Posterior cingulate gyrus (tissue), 11 donors: ENCODE measurements at regions of chr19 and their contacts with region 1.

Region 1: DNA sequence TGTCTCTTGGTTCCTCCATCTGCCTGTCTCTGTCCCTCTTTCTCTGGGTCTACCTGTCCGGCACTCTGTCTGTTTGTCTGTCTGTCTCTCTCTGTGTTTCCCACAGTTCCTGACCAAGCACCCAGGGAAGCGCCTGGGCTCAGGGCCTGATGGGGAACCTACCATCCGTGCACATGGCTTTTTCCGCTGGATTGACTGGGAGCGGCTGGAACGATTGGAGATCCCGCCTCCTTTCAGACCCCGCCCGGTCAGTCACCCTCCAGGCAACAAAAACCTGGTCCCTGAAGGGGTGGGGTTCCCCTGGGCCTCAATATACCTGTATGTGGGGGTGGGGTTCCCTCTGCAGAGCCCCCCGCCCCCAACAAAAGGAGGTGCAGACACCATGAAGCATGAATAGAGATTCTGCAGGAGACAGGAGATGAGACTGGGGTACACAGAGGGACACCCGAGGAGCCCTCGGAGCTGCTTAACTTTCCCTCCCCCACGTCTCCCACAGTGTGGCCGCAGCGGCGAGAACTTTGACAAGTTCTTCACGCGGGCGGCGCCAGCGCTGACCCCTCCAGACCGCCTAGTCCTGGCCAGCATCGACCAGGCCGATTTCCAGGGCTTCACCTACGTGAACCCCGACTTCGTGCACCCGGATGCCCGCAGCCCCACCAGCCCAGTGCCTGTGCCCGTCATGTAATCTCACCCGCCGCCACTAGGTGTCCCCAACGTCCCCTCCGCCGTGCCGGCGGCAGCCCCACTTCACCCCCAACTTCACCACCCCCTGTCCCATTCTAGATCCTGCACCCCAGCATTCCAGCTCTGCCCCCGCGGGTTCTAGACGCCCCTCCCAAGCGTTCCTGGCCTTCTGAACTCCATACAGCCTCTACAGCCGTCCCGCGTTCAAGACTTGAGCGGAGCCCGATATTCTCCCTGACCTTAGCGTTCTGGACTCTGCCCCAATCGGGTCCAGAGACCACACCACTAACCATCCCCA is 2.6 kb upstream of the CACNG7 start:
- DNase-seq: peak; percentile 60 to 95 (median 79)

Region 2: GRCh38 chr19:53977429-53977990 is 71.0 kb after region 1 on chr19:
- intact Hi-C with region 1: loop called (anchors 1 kb)
- DNase-seq: peak; percentile 55 to 96 (median 82)